Head of caudate nucleus (tissue), 42 donors: ENCODE measurements at regions of chr18 and their contacts with region 1.

Region 1: GRCh38 chr18:12455496-12455895 is 47.8 kb downstream of the PRELID3A start:
- DNase-seq: peak; percentile 76 to 98 (median 92)

Region 2: GRCh38 chr18:12408247-12408869 is 47.1 kb before region 1 on chr18:
- intact Hi-C with region 1: loop called (anchors 10 kb)
- DNase-seq: peak in 22 of 42 donors; percentile 8 to 59 (median 30)